K562 (cell line): ENCODE measurements at regions of chr11 and their contacts with region 1.

Region 1: DNA sequence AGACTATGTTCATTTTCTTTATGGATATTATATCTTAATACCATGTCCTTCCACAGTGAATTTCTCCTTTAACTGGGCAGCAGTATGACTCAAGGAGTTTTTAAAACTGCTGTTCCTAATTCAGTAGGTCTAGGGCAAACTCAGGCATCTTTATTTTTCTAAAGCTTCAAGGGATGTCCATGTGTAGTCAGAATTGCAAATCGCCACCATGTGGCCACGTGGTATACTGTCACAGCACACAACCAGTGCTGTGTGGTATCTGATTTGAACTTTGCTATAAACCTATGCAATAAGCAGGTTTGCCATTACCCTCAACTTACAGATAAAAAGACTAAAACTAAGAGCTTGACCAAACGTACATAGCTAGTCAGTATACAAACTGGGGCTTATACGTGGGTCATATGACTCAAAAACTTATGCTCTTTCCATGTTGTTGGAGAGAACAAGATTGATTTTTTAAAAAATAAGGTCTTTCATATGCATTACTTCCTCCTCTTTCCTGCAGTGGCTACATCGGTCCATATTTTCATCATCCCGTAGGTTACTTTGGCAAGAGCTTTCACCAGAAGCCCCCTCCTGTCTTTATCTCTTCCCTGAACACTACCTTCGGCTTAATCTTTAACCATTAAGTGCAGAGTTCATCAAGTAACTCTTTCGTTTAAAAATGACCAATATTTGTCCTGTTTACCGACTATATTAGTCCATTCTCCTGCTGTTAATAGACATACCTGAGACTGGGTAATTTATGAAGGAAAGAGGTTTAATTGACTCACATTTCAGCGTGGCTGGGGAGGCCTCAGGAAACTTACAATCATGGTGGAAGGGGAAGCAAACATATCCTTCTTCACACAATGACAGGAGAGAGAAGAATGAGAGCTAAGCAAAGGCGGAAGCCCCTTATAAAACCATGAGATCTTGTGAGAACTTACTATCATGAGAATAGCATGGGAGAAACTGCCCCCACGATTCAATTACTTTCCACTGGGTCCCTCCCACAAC is 8.0 kb upstream of the HTATIP2 start:
- DNase-seq: peak; percentile 45 to 72 (median 58)
- ATAC-seq: peak; percentile 89
- H3K4me3 ChIP-seq: no peak overlapping the region
- H3K27ac ChIP-seq: no peak overlapping the region
- H3K4me1 ChIP-seq: peaks cover 0 to 28% of the 10 kb centered on the region in 2 experiments; a peak in 4 of 5 replicates
- H3K27me3 ChIP-seq: no peaks in the 10 kb centered on the region
- CTCF ChIP-seq: peak; percentile 59 to 70 (median 64)
- EP300 ChIP-seq: no peak
- POLR2A ChIP-seq: no peak
- RAD21 ChIP-seq: peak; percentile 10 to 40; a peak in 2 of 4 replicates

Region 2: DNA sequence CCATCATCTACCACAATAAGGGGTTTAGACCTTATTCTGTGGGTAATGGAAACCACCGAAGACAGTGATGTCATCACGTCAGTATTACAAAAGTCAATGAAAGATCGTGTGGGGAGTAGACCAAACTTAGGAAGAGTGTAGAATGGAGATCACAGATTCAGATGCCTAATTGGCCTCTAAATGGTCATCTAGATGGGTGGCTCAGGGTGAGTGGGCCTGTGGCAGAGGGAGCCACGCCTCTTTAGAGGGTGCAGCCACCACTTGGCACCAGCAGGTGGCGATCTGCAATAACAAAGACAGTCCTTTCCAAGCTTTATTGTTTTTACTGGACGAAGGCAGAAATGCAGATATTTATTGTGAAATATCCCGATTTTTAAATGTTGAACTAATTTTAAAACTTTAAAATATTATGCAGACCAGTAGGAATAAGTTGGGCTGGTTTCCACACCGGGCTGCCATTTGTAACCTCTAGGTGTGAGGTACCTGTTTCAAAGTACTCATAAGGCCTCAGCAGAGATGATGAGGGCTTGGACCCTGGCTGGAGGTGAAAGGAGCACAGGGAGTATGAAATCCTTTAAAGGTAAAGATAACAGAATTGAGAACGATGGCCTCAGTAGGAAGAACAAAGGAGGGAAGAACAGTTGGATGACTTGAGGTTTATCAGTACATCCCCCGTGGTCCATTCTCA is 417.2 kb before region 1 on chr11:
- CTCF ChIA-PET with region 1: no interaction called
- POLR2A ChIA-PET with region 1: interaction called, 3 read pairs
- in situ Hi-C with region 1: loop called (anchors 10 kb)
- intact Hi-C with region 1: loop called (anchors 5 kb)
- DNase-seq: peak; percentile 70 to 84 (median 79)
- ATAC-seq: peak; percentile 92
- H3K4me3 ChIP-seq: no peak overlapping the region
- H3K27ac ChIP-seq: no peak overlapping the region
- H3K4me1 ChIP-seq: no peaks in the 10 kb centered on the region; a peak in 1 of 5 replicates
- H3K27me3 ChIP-seq: peaks cover 8 to 42% of the 10 kb centered on the region in 2 experiments
- CTCF ChIP-seq: peak; percentile 86 to 89 (median 88)
- EP300 ChIP-seq: no peak
- POLR2A ChIP-seq: no peak
- RAD21 ChIP-seq: peak; percentile 75 to 84

Region 3: DNA sequence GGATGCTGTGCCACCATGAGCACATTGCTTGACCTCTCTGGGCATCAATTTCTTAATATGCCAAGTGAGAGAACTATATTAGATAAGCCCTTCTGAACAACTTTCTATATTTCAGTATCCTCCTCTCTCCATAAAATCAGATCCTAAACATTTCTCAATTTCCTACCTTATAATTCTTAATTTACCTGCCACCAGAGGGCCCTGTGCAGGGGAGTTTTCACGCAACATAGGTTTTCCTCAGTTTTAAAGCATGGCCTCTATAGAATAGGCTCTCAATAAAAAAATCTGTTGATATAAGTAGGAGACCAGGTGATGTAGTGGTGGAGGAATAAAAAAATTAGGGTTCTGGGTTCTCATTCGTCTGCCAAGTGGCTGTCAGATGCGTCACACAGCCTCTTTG is 111.5 kb before region 1 on chr11:
- CTCF ChIA-PET with region 1: interaction called, 3 read pairs
- POLR2A ChIA-PET with region 1: no interaction called
- in situ Hi-C with region 1: no loop called
- intact Hi-C with region 1: loop called (anchors 2 kb)
- DNase-seq: peak in 1 of 4 experiments; percentile 11
- ATAC-seq: peak; percentile 62
- H3K4me3 ChIP-seq: no peak overlapping the region
- H3K27ac ChIP-seq: no peak overlapping the region
- H3K4me1 ChIP-seq: no peaks in the 10 kb centered on the region
- H3K27me3 ChIP-seq: peaks cover 4 to 17% of the 10 kb centered on the region in 2 experiments; a peak in 3 of 5 replicates
- CTCF ChIP-seq: peak; percentile 30 to 52 (median 48); a peak in 5 of 6 replicates
- EP300 ChIP-seq: no peak
- POLR2A ChIP-seq: no peak
- RAD21 ChIP-seq: peak in 1 of 2 experiments; percentile 24; a peak in 1 of 4 replicates